ENCODE measurements at regions of chr1 and their contacts with region 1.

Region 1: GRCh38 chr1:242411901-242412300 is 112.6 kb downstream of the PLD5 start:
- DNase-seq: no peak
- H3K4me3 ChIP-seq: no peak overlapping the region
- H3K27ac ChIP-seq: no peak overlapping the region
- H3K4me1 ChIP-seq: peaks cover 0 to 6% (median 0%) of the 10 kb centered on the region in 4 experiments; a peak in 3 of 7 replicates
- H3K27me3 ChIP-seq: no peaks in the 10 kb centered on the region
- CTCF ChIP-seq: no peak
- EP300 ChIP-seq: no peak
- POLR2A ChIP-seq: no peak
- RAD21 ChIP-seq: no peak

Region 2: DNA sequence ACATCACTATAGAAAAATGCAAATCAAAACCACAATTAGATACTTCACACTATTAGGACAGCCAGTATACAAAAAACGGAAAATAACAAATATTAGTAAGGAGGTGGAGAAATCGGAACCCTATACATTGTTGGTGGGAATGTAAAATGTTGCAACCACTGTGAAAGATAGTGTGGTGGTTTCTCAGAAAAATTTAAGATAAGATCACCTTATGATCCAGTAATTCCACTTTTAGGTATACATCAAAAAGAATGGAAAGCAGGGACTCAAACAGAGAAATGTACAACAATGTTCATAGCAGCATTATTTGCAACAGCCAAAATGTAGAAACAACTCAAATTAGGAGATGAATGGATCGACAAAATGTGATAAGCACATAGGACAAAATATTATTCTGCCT is 34.1 kb before region 1 on chr1:
- CTCF ChIA-PET with region 1: no interaction called
- POLR2A ChIA-PET with region 1: no interaction called
- DNase-seq: no peak
- H3K4me3 ChIP-seq: no peak overlapping the region
- H3K27ac ChIP-seq: no peak overlapping the region
- H3K4me1 ChIP-seq: no peaks in the 10 kb centered on the region
- H3K27me3 ChIP-seq: no peaks in the 10 kb centered on the region
- CTCF ChIP-seq: no peak
- EP300 ChIP-seq: no peak
- POLR2A ChIP-seq: no peak
- RAD21 ChIP-seq: no peak

Region 3: GRCh38 chr1:242425232-242425631 is 13.3 kb after region 1 on chr1:
- CTCF ChIA-PET with region 1: interaction called, 10 read pairs
- POLR2A ChIA-PET with region 1: no interaction called
- DNase-seq: no peak
- H3K4me3 ChIP-seq: no peak overlapping the region
- H3K27ac ChIP-seq: no peak overlapping the region
- H3K4me1 ChIP-seq: no peaks in the 10 kb centered on the region
- H3K27me3 ChIP-seq: no peaks in the 10 kb centered on the region
- CTCF ChIP-seq: peak in 1 of 3 experiments; percentile 16; a peak in 1 of 4 replicates
- EP300 ChIP-seq: no peak
- POLR2A ChIP-seq: no peak
- RAD21 ChIP-seq: no peak